A549 (cell line): ENCODE measurements at regions of chr15 and their contacts with region 1.

Region 1: DNA sequence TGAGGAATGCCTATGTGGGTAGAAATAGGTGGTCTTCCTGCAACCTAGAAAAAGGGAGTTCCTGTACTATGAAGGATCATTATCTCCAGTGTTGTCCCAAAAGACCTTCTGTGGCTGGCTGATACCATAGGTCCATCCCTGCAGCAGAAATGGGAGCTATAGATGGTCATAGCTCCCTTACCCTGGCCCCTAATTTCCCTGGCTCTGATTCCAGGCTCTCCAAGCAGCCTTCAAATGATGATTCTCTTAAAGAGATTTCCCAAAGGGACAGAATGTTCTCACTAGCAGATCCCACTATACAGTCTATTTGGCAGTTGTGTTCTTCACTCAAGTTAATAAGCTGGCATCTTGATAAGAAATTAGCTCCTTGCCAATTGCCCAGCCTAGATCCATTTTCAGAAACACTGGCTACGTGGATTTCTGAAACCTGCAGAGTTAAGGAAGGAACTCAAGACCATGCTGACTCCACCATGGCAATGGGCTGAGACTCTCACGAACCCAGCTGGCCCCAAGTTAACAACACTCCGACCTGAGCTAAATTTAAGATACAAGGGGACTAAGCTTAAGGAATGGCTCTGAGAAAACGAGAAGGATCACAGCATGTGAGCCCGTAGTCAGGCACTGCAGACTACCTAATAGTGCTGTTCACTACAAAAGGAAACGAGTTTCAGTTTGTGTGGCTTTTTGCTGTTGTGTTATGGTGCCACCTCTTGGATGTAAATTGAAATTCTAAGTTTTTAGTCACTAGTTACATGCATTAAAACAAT is 11.4 kb downstream of the C15orf40 start:
- DNase-seq: peak; percentile 54 to 69
- ATAC-seq: peak; percentile 87 to 88
- H3K4me3 ChIP-seq: peak overlapping the region; percentile 30; the same call in 2 of the 3 replicates
- H3K27ac ChIP-seq: peak overlapping the region; percentile 46 to 61; a peak in 4 of 6 replicates
- H3K4me1 ChIP-seq: peaks cover 4% of the 10 kb centered on the region; the same call in 1 of the 3 replicates
- CTCF ChIP-seq: peak; percentile 88
- EP300 ChIP-seq: no peak
- POLR2A ChIP-seq: no peak
- RAD21 ChIP-seq: peak; percentile 86 to 90

Region 2: DNA sequence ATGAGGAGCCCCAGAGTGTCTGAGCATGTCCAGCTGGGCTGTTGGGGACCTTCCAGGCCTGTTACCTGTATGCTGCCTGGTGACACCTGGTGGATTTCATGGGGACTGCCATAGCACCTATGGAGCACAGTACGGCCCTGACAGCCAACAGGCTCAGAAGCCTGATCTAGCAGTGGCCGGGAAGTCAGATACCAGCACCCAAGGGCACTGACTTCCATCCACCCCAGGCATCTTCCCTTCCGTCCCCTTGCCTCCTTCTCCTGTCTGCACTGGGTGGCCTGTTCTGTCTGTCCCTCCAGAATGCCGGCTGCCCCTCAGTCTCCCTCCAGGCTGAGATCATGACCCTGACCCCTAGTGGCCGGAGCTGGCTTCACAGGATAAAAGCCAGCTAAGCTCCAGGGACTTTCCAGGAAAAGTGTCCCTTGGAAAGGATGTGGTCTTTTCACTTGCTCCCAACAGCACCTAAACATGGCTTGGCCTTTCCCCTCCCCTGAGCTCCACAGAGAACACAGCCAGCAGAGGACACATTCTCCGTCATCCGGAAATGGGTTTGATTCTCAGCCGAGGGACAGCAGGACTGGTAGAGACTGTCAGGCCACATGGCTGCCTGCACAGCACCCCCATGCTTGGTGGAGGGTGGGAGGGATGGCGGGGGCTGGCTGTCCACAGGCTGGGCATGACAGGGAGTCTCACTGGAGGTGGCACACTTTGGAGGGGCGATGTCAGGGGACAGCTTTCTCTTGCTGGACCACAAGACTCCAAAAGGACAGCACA is 469.3 kb before region 1 on chr15:
- CTCF ChIA-PET with region 1: interaction called, 42 read pairs
- POLR2A ChIA-PET with region 1: interaction called, 4 read pairs
- DNase-seq: peak; percentile 80 to 86
- ATAC-seq: peak; percentile 77 to 81
- H3K4me3 ChIP-seq: no peak overlapping the region
- H3K27ac ChIP-seq: peak overlapping the region in 1 of 2 experiments; percentile 66; a peak in 3 of 6 replicates
- H3K4me1 ChIP-seq: peaks cover 4% of the 10 kb centered on the region; the same call in 1 of the 3 replicates
- CTCF ChIP-seq: peak; percentile 98
- EP300 ChIP-seq: no peak
- POLR2A ChIP-seq: no peak
- RAD21 ChIP-seq: peak; percentile 28 to 62

Region 3: DNA sequence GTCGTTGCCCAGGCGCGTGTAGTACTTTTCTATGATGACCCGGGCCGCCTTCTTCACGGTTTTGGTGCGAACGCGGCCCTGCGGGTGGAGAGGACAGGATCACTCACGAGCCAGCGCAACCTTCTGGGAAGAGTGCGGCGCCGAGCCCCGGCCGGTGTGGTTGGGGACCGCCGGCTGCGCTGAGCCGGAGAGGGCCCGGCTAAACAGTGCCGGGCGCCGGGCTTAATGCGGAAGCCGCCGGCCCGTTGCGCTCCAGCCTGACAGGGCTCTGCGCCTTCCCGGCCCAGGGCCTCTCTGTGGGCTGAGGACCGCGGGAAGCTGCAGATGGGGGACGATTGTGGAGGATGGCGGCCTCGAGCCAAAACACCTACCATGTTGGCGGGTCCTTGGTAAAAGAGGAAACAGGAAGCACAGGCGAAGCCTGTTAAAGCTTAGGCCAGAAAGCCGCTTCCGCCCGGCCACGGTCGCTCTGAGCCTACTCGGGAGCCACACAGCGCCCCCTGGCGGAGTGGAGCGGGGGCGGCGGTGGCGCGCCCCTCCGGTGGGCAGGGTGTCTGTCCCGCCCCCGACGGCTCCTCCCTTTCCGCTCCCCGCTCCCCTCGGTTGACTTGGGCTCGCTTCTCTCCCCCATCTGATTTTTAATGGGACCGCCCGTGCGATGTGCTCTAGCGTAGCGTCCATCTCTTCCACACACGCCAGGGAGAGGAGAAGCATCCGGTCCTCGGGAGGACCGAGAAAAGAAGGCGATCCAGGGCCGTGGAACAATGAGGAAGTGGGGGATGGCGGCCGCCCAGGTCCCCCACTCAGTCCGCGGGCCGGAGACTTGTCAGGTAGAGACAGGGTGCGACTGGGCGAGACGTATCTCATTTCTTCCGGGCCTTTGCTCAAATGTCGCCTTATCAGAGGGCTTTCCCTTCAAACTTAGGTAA is 459.8 kb before region 1 on chr15 and contains the start of gene RPS17:
- CTCF ChIA-PET with region 1: interaction called, 27 read pairs
- POLR2A ChIA-PET with region 1: interaction called, 3 read pairs
- DNase-seq: peak; percentile 97 to 98
- ATAC-seq: peak; percentile 80 to 96
- H3K4me3 ChIP-seq: peak within 1 kb of the TSS; percentile 79
- H3K27ac ChIP-seq: peak within 1 kb of the TSS; percentile 89 to 94
- H3K4me1 ChIP-seq: peaks cover 28% of the 10 kb centered on the region
- CTCF ChIP-seq: peak; percentile 99
- EP300 ChIP-seq: peak in 1 of 2 experiments; percentile 48; a peak in 1 of 5 replicates
- POLR2A ChIP-seq: peak; percentile 90
- RAD21 ChIP-seq: peak in 1 of 2 experiments; percentile 64; a peak in 4 of 5 replicates
- polyA plus RNA-seq, gene RPS17: 5,298 and 6,127 TPM in 2 replicates

Region 4: GRCh38 chr15:82849556-82850512 is 150.3 kb before region 1 on chr15:
- CTCF ChIA-PET with region 1: interaction called, 47 read pairs
- POLR2A ChIA-PET with region 1: no interaction called
- DNase-seq: peak; percentile 57 to 87
- ATAC-seq: peak; percentile 67 to 93
- H3K4me3 ChIP-seq: no peak overlapping the region
- H3K27ac ChIP-seq: no peak overlapping the region
- H3K4me1 ChIP-seq: no peaks in the 10 kb centered on the region
- CTCF ChIP-seq: peak; percentile 59
- EP300 ChIP-seq: no peak
- POLR2A ChIP-seq: no peak
- RAD21 ChIP-seq: peak; percentile 62 to 79

Region 5: DNA sequence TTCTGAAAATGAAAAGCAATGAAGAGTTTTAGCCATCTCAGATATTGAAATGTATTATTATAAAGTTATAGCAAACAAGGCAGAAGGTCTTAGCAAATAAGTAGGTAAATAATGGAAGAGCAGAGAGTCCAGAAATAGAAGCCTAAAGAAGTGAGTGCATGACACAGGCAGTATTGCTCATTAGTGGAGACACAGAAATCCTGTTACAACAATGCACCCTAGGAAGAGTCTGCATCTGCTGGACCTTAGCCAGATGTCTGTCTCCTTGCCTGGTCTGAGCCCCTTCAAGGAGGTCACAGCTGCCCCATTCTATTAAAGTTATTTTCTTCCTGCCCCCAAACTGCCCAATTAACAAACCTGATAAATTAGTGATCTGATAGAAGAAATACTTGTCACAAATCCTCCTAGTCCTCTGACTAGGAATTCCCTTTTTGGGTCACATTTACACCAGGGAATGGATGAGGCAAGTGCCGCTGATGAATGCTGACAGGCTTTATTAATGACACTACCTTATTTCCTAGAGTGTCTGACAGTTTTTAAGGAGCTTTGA is 99.5 kb before region 1 on chr15:
- CTCF ChIA-PET with region 1: no interaction called
- POLR2A ChIA-PET with region 1: no interaction called
- DNase-seq: no peak
- ATAC-seq: no peak
- H3K4me3 ChIP-seq: no peak overlapping the region
- H3K27ac ChIP-seq: no peak overlapping the region
- H3K4me1 ChIP-seq: no peaks in the 10 kb centered on the region
- CTCF ChIP-seq: no peak
- EP300 ChIP-seq: no peak
- POLR2A ChIP-seq: no peak
- RAD21 ChIP-seq: no peak

Region 6: GRCh38 chr15:82942617-82943078 is 57.4 kb before region 1 on chr15:
- CTCF ChIA-PET with region 1: interaction called, 12 read pairs
- POLR2A ChIA-PET with region 1: no interaction called
- DNase-seq: peak; percentile 33 to 43
- ATAC-seq: peak; percentile 64 to 84
- H3K4me3 ChIP-seq: no peak overlapping the region
- H3K27ac ChIP-seq: no peak overlapping the region
- H3K4me1 ChIP-seq: peaks cover 10% of the 10 kb centered on the region; the same call in 2 of the 3 replicates
- CTCF ChIP-seq: no peak
- EP300 ChIP-seq: no peak
- POLR2A ChIP-seq: no peak
- RAD21 ChIP-seq: no peak

Region 7: GRCh38 chr15:82985688-82986441 is 14.2 kb before region 1 on chr15 and contains the start of gene RAMAC:
- CTCF ChIA-PET with region 1: interaction called, 48 read pairs
- POLR2A ChIA-PET with region 1: interaction called, 4 read pairs
- DNase-seq: peak; percentile 93 to 98
- ATAC-seq: peak; percentile 99
- H3K4me3 ChIP-seq: peak within 1 kb of the TSS; percentile 59
- H3K27ac ChIP-seq: peak within 1 kb of the TSS; percentile 95 to 96
- H3K4me1 ChIP-seq: peaks cover 13% of the 10 kb centered on the region
- CTCF ChIP-seq: no peak
- EP300 ChIP-seq: no peak
- POLR2A ChIP-seq: peak; percentile 45; the same call in 1 of the 2 replicates
- RAD21 ChIP-seq: no peak
- polyA plus RNA-seq, gene RAMAC: 50.3 and 68.1 TPM in 2 replicates

Region 8: DNA sequence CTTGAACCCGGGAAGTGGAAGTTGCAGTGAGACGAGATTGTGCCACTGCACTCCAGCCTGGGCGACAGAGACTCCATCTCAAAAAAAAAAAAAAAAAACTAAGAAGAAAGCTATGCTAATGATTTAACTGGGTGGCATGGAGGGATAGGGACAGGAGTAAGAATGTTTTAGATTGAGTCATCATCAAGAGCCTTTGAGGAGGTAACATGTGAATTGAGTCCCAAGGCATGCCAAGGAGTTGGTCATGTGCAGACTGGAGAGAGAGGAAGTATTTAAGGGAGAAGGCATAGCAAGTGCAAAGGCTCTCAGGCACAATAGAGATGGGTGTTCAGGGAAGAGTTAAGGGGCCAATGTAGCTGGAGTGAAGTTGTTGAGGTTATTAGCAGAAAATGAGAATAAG is 275.3 kb after region 1 on chr15:
- CTCF ChIA-PET with region 1: no interaction called
- POLR2A ChIA-PET with region 1: no interaction called
- DNase-seq: peak in 1 of 2 experiments; percentile 20
- ATAC-seq: 0 out of 6 replicates have a peak, but pooled peaks of 1 of the 2 experiments have one; percentile 53
- H3K4me3 ChIP-seq: no peak overlapping the region
- H3K27ac ChIP-seq: no peak overlapping the region
- H3K4me1 ChIP-seq: no peaks in the 10 kb centered on the region
- CTCF ChIP-seq: no peak
- EP300 ChIP-seq: no peak
- POLR2A ChIP-seq: no peak
- RAD21 ChIP-seq: no peak